H1 (cell line): ENCODE measurements at regions of chr12 and their contacts with region 1.

Region 1: DNA sequence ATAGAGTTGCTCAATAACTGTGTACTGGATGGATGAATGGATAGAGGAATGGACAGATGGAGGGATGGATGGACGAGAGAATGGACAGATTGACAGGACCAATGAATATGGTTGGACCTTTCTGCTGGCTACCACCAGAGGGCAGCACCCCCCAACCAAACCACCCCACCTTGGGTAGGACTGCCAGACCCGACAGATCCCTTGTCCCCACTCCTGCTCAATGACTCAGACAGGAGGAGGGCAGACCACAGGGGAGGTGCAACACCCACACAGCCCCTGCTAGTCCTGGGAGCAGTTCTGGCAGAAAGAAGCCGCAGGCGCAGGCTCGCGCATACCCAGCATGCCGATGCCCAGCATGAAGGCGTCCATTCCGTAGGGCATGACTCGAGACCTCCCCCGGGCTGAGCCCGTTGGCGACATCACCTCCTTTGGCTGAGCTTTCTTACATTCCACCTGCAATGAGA is 12.4 kb downstream of the MSI1 start:
- DNase-seq: peak; percentile 80 to 90
- H3K4me3 ChIP-seq: no peak overlapping the region
- H3K27ac ChIP-seq: no peak overlapping the region
- H3K4me1 ChIP-seq: peaks cover 8 to 16% (median 13%) of the 10 kb centered on the region in 4 experiments
- H3K27me3 ChIP-seq: no peaks in the 10 kb centered on the region
- CTCF ChIP-seq: peak; percentile 91 to 94 (median 93)
- EP300 ChIP-seq: no peak
- POLR2A ChIP-seq: no peak
- RAD21 ChIP-seq: peak; percentile 93 to 96

Region 2: DNA sequence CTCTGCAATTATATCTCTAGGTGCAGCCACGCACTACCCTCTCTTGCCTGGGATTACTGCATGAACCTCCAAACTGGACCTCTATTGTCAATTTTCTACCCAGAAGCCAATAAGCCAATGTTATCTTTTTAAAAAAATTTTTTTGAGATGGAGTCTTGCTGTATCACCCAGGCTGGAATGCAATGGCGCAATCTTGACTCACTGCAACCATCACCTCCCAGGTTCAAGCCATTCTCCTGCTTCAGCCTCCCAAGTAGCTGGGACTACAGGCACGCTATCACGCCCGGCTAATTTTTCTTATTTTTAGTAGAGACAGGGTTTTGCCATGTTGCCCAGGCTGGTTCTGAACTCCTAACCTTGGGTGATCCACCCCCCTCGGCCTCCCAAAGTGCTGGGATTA is 79.9 kb before region 1 on chr12:
- CTCF ChIA-PET with region 1: no interaction called
- POLR2A ChIA-PET with region 1: no interaction called
- DNase-seq: no peak
- H3K4me3 ChIP-seq: no peak overlapping the region
- H3K27ac ChIP-seq: no peak overlapping the region
- H3K4me1 ChIP-seq: no peaks in the 10 kb centered on the region
- H3K27me3 ChIP-seq: no peaks in the 10 kb centered on the region
- CTCF ChIP-seq: no peak
- EP300 ChIP-seq: no peak
- POLR2A ChIP-seq: no peak
- RAD21 ChIP-seq: no peak

Region 3: GRCh38 chr12:120342156-120342555 is 14.4 kb before region 1 on chr12:
- CTCF ChIA-PET with region 1: interaction called, 7 read pairs
- POLR2A ChIA-PET with region 1: interaction called, 13 read pairs
- DNase-seq: peak in 1 of 2 experiments; percentile 54
- H3K4me3 ChIP-seq: 0 out of 8 replicates have a peak overlapping the region, but pooled peaks of 1 of the 4 experiments have one; percentile 9
- H3K27ac ChIP-seq: no peak overlapping the region; the same call in 1 of the 2 replicates
- H3K4me1 ChIP-seq: peaks cover 0 to 9% (median 4%) of the 10 kb centered on the region in 4 experiments; a peak in 5 of 7 replicates
- H3K27me3 ChIP-seq: no peaks in the 10 kb centered on the region
- CTCF ChIP-seq: no peak
- EP300 ChIP-seq: no peak
- POLR2A ChIP-seq: no peak
- RAD21 ChIP-seq: no peak

Region 4: DNA sequence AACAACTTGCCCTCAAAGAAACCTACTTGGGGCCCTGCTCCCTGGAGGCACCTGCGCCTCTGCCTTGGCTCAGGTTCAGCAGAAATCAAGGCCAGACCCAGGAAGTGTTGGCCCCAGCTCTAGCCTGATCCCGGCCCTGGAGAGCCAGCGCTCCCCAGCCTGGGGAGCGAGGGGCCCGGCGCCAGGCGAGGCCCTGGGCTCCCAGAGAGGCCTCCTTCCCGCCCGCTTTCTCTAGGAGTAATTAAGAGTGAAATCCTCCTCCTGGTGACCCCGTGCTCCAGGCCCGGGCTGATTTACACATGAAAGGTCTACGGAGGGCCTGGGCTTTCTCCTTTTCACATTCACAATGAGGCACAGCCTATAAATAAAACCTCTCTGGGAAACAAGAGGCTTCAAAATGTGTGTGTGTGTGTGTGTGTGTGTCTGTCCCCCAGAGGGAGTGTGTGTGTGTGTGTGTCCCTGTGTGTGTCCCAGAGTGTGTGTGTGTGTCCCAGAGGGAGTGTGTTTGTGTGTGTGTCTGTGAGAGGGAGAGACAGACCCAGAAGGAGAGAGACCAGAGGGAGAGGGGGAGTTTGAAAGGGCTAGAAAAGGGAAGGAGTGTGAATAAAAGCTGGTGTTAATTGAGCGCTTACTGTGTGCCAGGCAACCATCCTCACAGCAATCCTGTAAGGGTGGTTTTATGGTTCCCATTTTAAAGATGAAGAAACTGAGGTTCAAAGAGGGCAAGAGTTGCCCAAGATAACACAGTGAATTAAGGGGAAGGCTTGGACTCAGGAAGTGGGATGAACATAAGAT is 57.5 kb after region 1 on chr12:
- CTCF ChIA-PET with region 1: interaction called, 11 read pairs
- POLR2A ChIA-PET with region 1: interaction called, 3 read pairs
- DNase-seq: peak; percentile 80 to 89
- H3K4me3 ChIP-seq: peak overlapping the region in 3 of 4 experiments; percentile 6 to 36 (median 23); a peak in 4 of 8 replicates
- H3K27ac ChIP-seq: peak overlapping the region; percentile 70; the same call in 1 of the 2 replicates
- H3K4me1 ChIP-seq: peaks cover 0 to 10% (median 6%) of the 10 kb centered on the region in 4 experiments; a peak in 3 of 7 replicates
- H3K27me3 ChIP-seq: no peaks in the 10 kb centered on the region
- CTCF ChIP-seq: no peak
- EP300 ChIP-seq: no peak; a peak in 1 of 3 replicates
- POLR2A ChIP-seq: peak; percentile 51 to 80
- RAD21 ChIP-seq: peak; percentile 1 to 14; a peak in 2 of 4 replicates

Region 5: DNA sequence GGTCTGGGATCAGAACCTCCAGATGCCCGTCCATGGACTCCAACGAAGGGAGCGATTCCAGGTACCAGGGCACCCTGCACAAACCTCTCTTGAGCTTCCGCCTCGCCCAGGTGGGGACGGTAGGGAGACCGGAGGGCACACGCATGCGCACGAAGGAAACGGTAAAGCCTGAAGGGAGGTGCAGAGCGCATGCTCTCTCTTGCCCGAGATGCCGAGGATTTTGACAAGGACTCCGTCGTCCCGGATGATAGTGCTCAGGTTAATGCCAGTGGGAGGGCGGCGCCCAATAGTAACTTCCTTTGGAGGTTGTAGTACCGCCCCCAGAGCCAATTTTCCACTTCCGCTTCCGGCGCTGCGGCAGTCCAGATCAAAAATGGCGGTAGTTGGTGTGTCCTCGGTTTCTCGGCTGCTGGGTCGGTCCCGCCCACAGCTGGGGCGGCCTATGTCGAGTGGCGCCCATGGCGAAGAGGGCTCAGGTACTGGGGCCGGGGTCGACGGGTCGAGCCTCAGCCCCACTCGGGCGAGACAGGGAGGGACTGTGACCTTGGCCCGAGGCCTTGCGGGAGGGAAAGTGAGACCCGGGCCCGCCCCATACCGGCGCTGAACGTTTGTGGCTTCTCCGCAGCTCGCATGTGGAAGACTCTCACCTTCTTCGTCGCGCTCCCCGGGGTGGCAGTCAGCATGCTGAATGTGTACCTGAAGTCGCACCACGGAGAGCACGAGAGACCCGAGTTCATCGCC is 81.3 kb after region 1 on chr12 and contains the start of gene COX6A1:
- CTCF ChIA-PET with region 1: interaction called, 310 read pairs
- POLR2A ChIA-PET with region 1: interaction called, 8 read pairs
- DNase-seq: peak; percentile 94 to 98
- H3K4me3 ChIP-seq: peak within 1 kb of the TSS; percentile 81 to 92 (median 90)
- H3K27ac ChIP-seq: peak within 1 kb of the TSS; percentile 58; the same call in 1 of the 2 replicates
- H3K4me1 ChIP-seq: peaks cover 0 to 2% (median under 1%) of the 10 kb centered on the region in 4 experiments; a peak in 1 of 7 replicates
- H3K27me3 ChIP-seq: no peaks in the 10 kb centered on the region
- CTCF ChIP-seq: peak; percentile 25 to 31 (median 28); a peak in 3 of 4 replicates
- EP300 ChIP-seq: no peak
- POLR2A ChIP-seq: peak; percentile 35 to 82
- RAD21 ChIP-seq: peak in 1 of 2 experiments; percentile 9; a peak in 2 of 4 replicates
- total RNA-seq, gene COX6A1: 437 and 465 TPM in 2 replicates